Endothelial cell of umbilical vein (primary cell): ENCODE measurements at regions of chr15 and their contacts with region 1.

Region 1: GRCh38 chr15:78811124-78811824 is at the start of gene ADAMTS7:
- DNase-seq: peak; percentile 62
- H3K4me3 ChIP-seq: peak within 1 kb of the TSS; percentile 69 to 94 (median 72)
- H3K27ac ChIP-seq: peak within 1 kb of the TSS; percentile 59
- H3K4me1 ChIP-seq: peaks cover 14% of the 10 kb centered on the region
- H3K27me3 ChIP-seq: no peaks in the 10 kb centered on the region
- CTCF ChIP-seq: peak; percentile 62 to 80
- POLR2A ChIP-seq: peak; percentile 79
- total RNA-seq, gene ADAMTS7: 56.4 and 64.7 TPM in 2 replicates

Region 2: GRCh38 chr15:78761891-78762385 is 49.3 kb before region 1 on chr15:
- CTCF ChIA-PET with region 1: interaction called, 5 read pairs
- POLR2A ChIA-PET with region 1: no interaction called
- dilution Hi-C with region 1: no loop called
- intact Hi-C with region 1: loop called (anchors 1 kb)
- DNase-seq: no peak
- H3K4me3 ChIP-seq: no peak overlapping the region
- H3K27ac ChIP-seq: peak overlapping the region; percentile 85
- H3K4me1 ChIP-seq: peaks cover 27% of the 10 kb centered on the region
- H3K27me3 ChIP-seq: no peaks in the 10 kb centered on the region
- CTCF ChIP-seq: no peak
- POLR2A ChIP-seq: no peak

Region 3: GRCh38 chr15:78795670-78796069 is 15.6 kb before region 1 on chr15:
- CTCF ChIA-PET with region 1: interaction called, 9 read pairs
- POLR2A ChIA-PET with region 1: no interaction called
- dilution Hi-C with region 1: no loop called
- intact Hi-C with region 1: loop called (anchors 1 kb)
- DNase-seq: no peak
- H3K4me3 ChIP-seq: no peak overlapping the region
- H3K27ac ChIP-seq: no peak overlapping the region
- H3K4me1 ChIP-seq: no peaks in the 10 kb centered on the region
- H3K27me3 ChIP-seq: no peaks in the 10 kb centered on the region
- CTCF ChIP-seq: no peak
- POLR2A ChIP-seq: no peak

Region 4: DNA sequence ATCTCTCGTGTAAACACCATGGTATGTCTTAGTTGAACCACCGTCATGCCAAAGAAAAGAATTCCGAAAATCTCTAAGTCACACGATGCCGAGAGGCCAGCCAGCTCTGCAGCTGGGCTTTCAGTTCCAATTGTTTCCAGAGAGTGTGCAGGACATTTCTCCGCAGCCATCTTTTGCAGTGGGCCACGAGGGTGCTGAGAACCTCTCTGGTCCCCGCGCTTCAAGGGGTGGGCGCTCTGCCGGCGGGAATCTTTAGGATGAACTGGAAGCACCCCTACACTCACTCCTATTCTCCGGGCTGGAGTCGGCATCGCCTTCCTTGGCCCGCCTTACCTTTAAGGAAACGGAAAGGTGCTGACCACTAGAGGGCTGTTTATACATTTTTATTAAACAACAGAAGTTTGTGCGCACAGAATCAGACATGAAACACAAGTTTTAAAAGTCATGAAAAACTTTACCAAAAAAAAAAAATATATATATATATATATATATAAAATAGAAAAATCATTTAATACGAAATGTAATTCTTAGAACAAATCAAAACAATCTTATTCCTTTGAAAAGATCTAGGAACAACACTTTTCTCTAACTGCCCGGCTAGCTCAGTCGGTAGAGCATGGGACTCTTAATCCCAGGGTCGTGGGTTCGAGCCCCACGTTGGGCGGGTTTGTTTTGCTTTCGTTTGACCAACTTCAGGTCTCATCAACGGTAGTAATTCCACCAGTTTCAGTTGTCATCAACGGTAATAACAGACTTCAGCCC is 48.9 kb after region 1 on chr15:
- CTCF ChIA-PET with region 1: interaction called, 13 read pairs
- POLR2A ChIA-PET with region 1: interaction called, 3 read pairs
- dilution Hi-C with region 1: no loop called
- intact Hi-C with region 1: loop called (anchors 1 kb)
- DNase-seq: peak; percentile 76
- H3K4me3 ChIP-seq: peak overlapping the region; percentile 47 to 83 (median 74)
- H3K27ac ChIP-seq: peak overlapping the region; percentile 61
- H3K4me1 ChIP-seq: peaks cover 5% of the 10 kb centered on the region
- H3K27me3 ChIP-seq: peaks cover 0 to 2% of the 10 kb centered on the region in 2 experiments
- CTCF ChIP-seq: peak; percentile 42 to 44
- POLR2A ChIP-seq: no peak

Region 5: GRCh38 chr15:78872972-78873792 is 61.9 kb after region 1 on chr15:
- CTCF ChIA-PET with region 1: interaction called, 5 read pairs
- POLR2A ChIA-PET with region 1: interaction called, 3 read pairs
- dilution Hi-C with region 1: no loop called
- intact Hi-C with region 1: loop called (anchors 1 kb)
- DNase-seq: peak; percentile 91
- H3K4me3 ChIP-seq: peak overlapping the region; percentile 83 to 97 (median 91)
- H3K27ac ChIP-seq: peak overlapping the region; percentile 98
- H3K4me1 ChIP-seq: peaks cover 22% of the 10 kb centered on the region
- H3K27me3 ChIP-seq: no peaks in the 10 kb centered on the region
- CTCF ChIP-seq: peak; percentile 43 to 71
- POLR2A ChIP-seq: peak; percentile 30

Region 6: DNA sequence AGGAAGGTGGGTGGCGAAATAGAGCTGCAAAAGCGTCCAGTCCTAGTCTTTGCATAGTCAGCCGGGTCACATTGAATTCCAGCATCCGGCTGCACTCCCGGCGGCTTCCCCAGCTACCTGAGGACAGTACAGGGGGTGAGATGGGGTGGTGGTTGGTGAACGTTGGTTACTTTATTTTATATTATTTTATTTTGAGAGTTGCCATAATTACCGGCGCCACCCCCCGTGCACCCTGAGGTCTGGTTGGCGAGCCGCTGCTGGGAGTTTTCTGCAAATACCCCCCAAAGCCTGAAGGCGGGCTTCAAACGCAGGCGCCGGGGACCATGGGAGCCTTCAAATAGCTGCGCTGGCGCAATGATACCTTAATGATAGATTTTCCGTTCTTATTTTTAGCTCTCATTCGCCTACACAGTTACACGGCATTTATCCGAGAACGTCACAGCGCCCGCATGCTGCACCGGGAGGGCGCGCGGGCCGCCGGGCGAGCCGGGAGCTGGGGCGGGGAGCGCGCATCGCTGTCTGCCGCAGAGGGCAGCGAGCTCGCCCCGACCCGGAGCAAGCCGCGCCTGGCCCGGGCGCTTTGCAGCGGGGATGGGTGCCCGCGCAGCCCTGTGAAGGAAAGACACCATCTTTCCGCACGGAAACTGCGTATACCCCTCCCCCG is 280.1 kb after region 1 on chr15:
- CTCF ChIA-PET with region 1: no interaction called
- POLR2A ChIA-PET with region 1: no interaction called
- dilution Hi-C with region 1: no loop called
- intact Hi-C with region 1: no loop called
- DNase-seq: no peak
- H3K4me3 ChIP-seq: no peak overlapping the region
- H3K27ac ChIP-seq: no peak overlapping the region
- H3K4me1 ChIP-seq: no peaks in the 10 kb centered on the region
- H3K27me3 ChIP-seq: peaks cover 28 to 30% of the 10 kb centered on the region in 2 experiments
- CTCF ChIP-seq: no peak
- POLR2A ChIP-seq: no peak